ENCODE measurements at regions of chr19 and their contacts with region 1.

Region 1: DNA sequence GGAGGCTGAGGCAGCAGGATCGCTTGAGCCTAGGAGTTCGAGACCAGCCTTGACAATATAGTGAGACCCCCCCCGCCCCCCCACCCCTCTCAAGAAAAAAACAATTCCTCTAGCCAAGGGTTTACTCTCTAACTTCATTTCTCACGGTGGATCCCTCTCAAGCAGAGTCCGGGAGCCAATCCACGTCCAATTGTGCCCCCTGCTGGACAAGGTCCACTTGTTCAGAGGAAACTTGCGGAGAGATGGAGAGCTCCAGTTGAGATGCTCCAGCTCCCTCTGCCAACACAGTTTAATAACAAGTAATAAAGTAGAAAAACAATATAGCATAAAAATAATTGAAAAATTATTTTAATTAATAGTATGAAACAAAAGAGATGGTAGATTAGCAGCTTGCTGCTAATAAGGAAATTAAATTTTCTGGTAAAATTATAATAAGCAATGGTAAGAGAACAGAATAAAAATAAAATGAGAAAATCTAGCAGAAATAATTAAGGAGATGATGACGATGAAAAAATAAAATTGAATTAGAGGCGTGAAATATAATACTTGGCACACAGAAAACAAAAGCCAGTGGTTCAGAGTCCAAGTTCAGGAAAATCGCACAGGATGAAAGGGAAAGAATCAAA is 14.5 kb upstream of the SIGLEC14 start:
- DNase-seq: peak; percentile 69
- H3K4me3 ChIP-seq: no peak overlapping the region
- H3K27ac ChIP-seq: no peak overlapping the region
- H3K4me1 ChIP-seq: peaks cover 2% of the 10 kb centered on the region
- H3K27me3 ChIP-seq: peaks cover 0 to 2% of the 10 kb centered on the region in 2 experiments
- CTCF ChIP-seq: peak; percentile 65 to 68
- POLR2A ChIP-seq: no peak

Region 2: GRCh38 chr19:51338563-51339312 is 322.4 kb before region 1 on chr19:
- CTCF ChIA-PET with region 1: interaction called, 16 read pairs
- POLR2A ChIA-PET with region 1: no interaction called
- dilution Hi-C with region 1: no loop called
- intact Hi-C with region 1: loop called (anchors 2 kb)
- DNase-seq: peak; percentile 86
- H3K4me3 ChIP-seq: peak overlapping the region; percentile 55 to 82 (median 73)
- H3K27ac ChIP-seq: no peak overlapping the region
- H3K4me1 ChIP-seq: peaks cover 8% of the 10 kb centered on the region
- H3K27me3 ChIP-seq: no peaks in the 10 kb centered on the region
- CTCF ChIP-seq: peak; percentile 76 to 88
- POLR2A ChIP-seq: no peak

Region 3: DNA sequence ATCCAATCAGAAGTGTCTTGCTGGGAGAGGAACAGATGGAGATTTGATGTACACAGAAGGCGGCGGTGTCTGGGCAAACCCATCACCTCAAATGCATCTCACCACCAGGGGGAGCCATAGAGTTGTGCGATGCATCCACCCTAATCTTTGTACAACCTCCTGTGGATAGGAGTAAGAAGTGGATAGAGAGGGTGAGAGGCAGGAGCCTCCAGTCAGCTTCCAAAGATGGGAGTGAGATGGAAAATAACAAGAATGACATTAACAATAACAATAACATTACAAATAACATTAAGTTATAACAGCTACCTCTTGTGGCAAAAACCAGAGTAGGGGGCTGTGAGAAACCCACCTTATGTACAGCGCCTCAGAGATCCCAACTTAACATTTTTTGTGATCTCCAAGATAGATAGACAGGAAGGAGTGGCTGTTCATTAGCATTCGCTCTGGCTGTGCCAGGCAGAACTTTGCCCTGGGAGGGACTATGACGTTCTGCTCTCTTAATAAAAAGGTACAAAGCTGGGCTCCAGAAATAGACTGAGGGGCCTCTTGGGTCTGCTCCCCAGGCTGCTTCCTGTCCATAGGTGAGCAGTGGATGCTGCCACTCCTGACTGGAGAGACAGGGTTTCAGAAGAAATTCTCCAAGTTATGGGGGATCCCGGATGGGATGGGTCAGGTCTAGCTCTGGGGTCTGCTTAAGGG is 187.9 kb before region 1 on chr19:
- CTCF ChIA-PET with region 1: interaction called, 414 read pairs
- POLR2A ChIA-PET with region 1: no interaction called
- dilution Hi-C with region 1: no loop called
- intact Hi-C with region 1: loop called (anchors 1 kb)
- DNase-seq: peak; percentile 61
- H3K4me3 ChIP-seq: no peak overlapping the region
- H3K27ac ChIP-seq: no peak overlapping the region
- H3K4me1 ChIP-seq: peaks cover 4% of the 10 kb centered on the region
- H3K27me3 ChIP-seq: no peaks in the 10 kb centered on the region
- CTCF ChIP-seq: peak; percentile 73 to 83
- POLR2A ChIP-seq: no peak

Region 4: DNA sequence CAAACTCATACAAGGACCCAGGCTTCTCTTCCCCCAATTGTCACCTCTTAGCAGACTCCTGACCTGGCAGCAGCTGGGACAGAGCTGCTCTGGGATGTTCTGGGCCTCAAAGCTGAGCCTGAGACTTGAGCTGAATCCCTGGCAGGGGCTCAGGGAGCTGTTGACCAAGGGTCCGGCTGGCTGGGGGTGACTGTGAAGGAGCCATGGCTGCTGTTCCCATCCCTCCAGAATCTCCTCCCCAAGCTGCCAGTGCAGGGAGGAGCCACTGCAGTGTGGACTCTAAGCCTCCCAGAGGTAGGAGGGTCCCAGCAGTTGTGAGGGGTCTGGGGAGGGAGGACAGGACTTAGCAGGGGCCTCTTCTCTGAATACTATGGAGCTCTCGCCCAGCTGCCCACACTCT is 131.8 kb before region 1 on chr19:
- CTCF ChIA-PET with region 1: no interaction called
- POLR2A ChIA-PET with region 1: no interaction called
- dilution Hi-C with region 1: no loop called
- intact Hi-C with region 1: no loop called
- DNase-seq: no peak
- H3K4me3 ChIP-seq: no peak overlapping the region
- H3K27ac ChIP-seq: no peak overlapping the region
- H3K4me1 ChIP-seq: no peaks in the 10 kb centered on the region
- H3K27me3 ChIP-seq: peaks cover 0 to 11% of the 10 kb centered on the region in 2 experiments
- CTCF ChIP-seq: no peak
- POLR2A ChIP-seq: no peak

Region 5: DNA sequence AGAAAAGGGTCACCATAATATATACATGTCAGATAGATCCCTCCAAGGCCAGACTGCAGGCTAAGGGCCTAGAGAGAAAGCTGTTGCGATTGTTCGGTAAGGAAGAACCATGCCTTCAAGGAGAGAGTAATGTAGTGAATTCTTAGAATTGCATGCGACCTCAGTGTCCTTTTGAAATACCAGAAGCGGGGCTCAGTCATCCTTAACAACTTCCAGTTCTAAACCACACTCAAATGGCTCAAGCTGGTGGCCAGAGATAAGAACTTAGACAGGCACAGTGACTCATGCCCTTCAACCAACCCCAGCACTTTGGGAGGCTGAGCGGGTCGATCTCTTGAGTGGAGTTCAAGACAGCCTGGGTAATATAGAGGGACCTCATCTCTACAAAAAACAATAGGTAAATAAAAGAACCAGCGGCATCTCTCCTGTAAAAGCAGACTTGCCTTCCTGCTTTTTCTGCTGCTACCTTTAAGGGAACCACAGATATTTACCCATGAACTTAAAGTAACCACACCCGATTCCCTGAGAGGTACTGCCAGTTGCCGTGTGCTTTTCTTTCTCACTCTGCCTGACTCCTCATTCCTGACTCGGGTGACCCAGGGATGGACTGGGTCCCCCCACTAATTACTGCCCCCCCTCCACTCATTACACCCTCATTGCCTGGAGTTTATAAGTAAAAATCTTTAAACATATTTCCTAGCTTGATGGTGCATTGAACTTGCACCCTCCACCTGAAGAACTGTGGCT is 114.3 kb before region 1 on chr19:
- CTCF ChIA-PET with region 1: interaction called, 10 read pairs
- POLR2A ChIA-PET with region 1: no interaction called
- dilution Hi-C with region 1: no loop called
- intact Hi-C with region 1: no loop called
- DNase-seq: peak; percentile 91
- H3K4me3 ChIP-seq: no peak overlapping the region
- H3K27ac ChIP-seq: peak overlapping the region; percentile 89
- H3K4me1 ChIP-seq: peaks cover 28% of the 10 kb centered on the region
- H3K27me3 ChIP-seq: no peaks in the 10 kb centered on the region
- CTCF ChIP-seq: no peak
- POLR2A ChIP-seq: peak; percentile 88

Region 6: GRCh38 chr19:51637362-51637978 is 23.6 kb before region 1 on chr19:
- CTCF ChIA-PET with region 1: interaction called, 35 read pairs
- POLR2A ChIA-PET with region 1: no interaction called
- dilution Hi-C with region 1: no loop called
- intact Hi-C with region 1: no loop called
- DNase-seq: peak; percentile 19
- H3K4me3 ChIP-seq: no peak overlapping the region
- H3K27ac ChIP-seq: no peak overlapping the region
- H3K4me1 ChIP-seq: no peaks in the 10 kb centered on the region
- H3K27me3 ChIP-seq: peaks cover 3 to 6% of the 10 kb centered on the region in 2 experiments
- CTCF ChIP-seq: peak; percentile 43 to 46
- POLR2A ChIP-seq: no peak

Region 7: DNA sequence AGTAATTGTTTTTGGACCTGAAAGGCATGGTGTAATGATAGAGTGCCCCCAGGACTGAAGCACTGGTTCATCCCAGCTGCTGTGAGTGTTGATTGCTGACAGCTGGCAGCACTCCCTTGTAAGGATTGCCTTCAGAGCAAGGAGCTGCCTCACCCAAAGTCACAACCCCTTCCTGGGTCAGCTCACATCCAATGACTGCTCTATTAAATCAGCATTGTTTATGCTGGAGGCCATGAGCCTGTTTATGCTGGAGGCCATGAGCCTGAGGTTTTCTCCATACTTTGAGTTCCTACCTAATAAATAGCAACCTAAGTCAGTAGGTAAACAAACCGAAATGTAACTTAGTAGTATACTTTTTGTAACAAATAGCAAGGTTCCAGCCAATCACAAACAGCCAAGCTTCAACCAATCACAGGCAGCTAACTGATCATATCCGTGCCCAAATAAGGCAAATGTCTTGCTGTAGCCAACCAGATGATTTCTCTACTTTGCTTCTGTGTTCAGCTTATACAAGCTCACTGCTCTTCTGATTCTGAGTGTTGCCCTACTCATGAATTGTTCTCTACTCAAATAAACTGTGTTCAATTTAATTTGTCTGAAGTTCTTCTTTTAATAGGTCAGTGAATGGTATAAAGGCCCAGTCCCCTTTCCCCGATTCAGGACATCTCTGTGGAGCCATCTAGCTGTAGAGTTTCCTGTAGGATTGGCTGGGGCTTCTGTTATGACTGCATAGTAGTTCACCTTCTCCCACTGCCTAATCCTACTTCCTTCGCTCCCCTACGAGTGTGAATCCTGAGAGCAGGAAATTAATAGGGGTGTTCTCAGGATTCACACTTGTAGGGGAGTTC is 20.5 kb after region 1 on chr19:
- CTCF ChIA-PET with region 1: interaction called, 40 read pairs
- POLR2A ChIA-PET with region 1: no interaction called
- dilution Hi-C with region 1: no loop called
- intact Hi-C with region 1: no loop called
- DNase-seq: no peak
- H3K4me3 ChIP-seq: no peak overlapping the region
- H3K27ac ChIP-seq: no peak overlapping the region
- H3K4me1 ChIP-seq: peaks cover 4% of the 10 kb centered on the region
- H3K27me3 ChIP-seq: peaks cover 2 to 4% of the 10 kb centered on the region in 2 experiments
- CTCF ChIP-seq: no peak
- POLR2A ChIP-seq: no peak

Region 8: DNA sequence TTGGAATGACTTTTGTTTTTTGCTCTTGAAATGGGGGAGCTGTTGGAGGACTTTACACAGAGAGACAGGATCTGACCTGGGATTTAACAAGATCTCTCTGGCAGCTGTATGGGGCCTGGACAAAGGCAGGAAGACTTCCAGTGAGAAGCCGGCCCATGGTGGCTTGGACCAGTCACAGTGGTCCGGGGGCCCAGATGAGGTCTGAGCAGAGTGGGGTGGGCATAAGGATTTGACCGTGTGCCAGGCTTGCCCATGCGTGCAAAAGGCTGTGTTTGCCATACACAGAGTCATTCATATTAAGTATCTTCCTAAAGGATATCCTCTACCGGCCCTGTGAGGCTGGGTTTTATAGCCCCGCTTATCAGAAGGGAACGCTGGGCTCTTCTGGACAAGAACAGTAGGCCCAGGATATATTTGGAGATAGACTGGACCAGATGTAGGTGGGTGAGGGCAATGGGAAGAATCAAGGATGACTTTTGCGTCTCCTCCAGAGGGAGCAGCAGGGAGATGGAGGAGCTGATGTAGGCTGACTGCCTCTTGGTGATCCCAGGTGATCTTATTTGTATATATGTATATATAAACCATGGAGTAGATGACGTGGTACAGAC is 36.2 kb after region 1 on chr19:
- CTCF ChIA-PET with region 1: no interaction called
- POLR2A ChIA-PET with region 1: no interaction called
- dilution Hi-C with region 1: no loop called
- intact Hi-C with region 1: no loop called
- DNase-seq: no peak
- H3K4me3 ChIP-seq: no peak overlapping the region
- H3K27ac ChIP-seq: no peak overlapping the region
- H3K4me1 ChIP-seq: peaks cover under 1% of the 10 kb centered on the region
- H3K27me3 ChIP-seq: no peaks in the 10 kb centered on the region
- CTCF ChIP-seq: no peak
- POLR2A ChIP-seq: no peak

Region 9: DNA sequence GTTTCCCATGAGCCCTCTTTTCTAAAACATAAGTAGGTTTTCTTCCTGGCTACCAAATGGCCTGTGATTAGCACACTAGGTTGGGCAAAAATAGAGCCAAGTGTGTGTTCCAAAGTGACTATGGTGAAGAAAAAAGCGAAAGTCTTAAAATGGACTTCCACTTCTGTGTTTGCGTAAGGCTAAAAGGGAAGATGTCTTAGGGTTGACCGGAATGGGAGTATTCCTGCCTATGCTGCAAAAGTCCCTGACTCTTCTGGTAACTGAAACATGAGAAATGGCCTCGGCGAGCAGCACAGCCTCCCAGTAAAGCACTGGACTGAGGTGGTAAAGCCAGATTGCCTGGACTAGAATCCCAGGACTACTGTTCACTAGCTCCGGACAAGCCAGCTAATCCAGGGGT is 93.0 kb after region 1 on chr19:
- CTCF ChIA-PET with region 1: no interaction called
- POLR2A ChIA-PET with region 1: no interaction called
- dilution Hi-C with region 1: no loop called
- intact Hi-C with region 1: no loop called
- DNase-seq: no peak
- H3K4me3 ChIP-seq: no peak overlapping the region
- H3K27ac ChIP-seq: no peak overlapping the region
- H3K4me1 ChIP-seq: no peaks in the 10 kb centered on the region
- H3K27me3 ChIP-seq: no peaks in the 10 kb centered on the region
- CTCF ChIP-seq: no peak
- POLR2A ChIP-seq: no peak

Region 10: DNA sequence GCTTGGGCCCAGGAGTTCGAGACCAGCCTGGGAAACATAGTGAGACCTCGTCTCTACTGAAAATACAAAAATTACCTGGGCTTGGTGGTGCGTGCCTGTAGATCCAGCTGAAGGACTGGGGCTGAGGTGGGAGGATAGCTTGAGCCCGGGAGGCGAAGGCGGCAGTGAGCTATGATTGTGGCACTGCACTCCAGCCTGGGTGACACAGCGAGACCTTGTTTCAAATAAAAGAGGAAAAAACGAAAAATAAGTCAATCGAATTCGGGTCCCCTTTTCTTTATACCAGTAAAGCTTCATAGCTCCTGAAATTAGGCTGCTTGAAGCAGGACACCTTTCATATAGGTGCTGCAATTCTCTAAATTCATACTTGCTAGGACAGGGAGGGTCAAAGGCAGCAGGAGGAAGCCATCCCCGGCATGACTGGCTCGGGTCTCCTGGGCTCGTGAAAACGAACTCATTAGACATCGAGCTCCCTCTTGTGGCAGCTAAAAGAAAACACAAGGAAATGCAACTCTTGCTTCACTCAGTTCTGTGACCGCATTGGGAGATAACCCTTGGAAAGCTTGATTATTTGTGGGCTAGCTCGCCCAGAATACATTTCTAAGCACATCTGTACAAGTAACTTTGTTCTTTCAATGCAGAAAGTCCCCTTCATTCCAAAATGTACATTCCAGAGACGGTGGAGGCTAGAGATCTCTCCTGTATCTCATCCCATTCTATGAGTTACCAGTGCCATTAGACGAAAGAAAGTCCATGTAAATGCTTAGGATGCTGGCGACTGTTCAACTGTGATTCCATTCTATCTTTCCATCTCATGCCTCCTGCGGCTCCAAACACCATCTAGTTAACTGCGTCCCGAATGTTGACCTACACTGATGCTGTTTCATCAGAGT is 116.7 kb after region 1 on chr19:
- CTCF ChIA-PET with region 1: interaction called, 30 read pairs
- POLR2A ChIA-PET with region 1: no interaction called
- dilution Hi-C with region 1: no loop called
- intact Hi-C with region 1: loop called (anchors 2 kb)
- DNase-seq: peak; percentile 52
- H3K4me3 ChIP-seq: no peak overlapping the region
- H3K27ac ChIP-seq: no peak overlapping the region
- H3K4me1 ChIP-seq: no peaks in the 10 kb centered on the region
- H3K27me3 ChIP-seq: no peaks in the 10 kb centered on the region
- CTCF ChIP-seq: peak; percentile 63 to 69
- POLR2A ChIP-seq: no peak